ENCODE measurements at regions of chr22 and their contacts with region 1.

Region 1: GRCh38 chr22:37199103-37199759 is 11.2 kb upstream of the C1QTNF6 start:
- DNase-seq: peak; percentile 99
- CTCF ChIP-seq: peak; percentile 94

Region 2: GRCh38 chr22:37077884-37078485 is 121.2 kb before region 1 on chr22:
- CTCF ChIA-PET with region 1: interaction called, 40 read pairs
- POLR2A ChIA-PET with region 1: no interaction called
- DNase-seq: peak; percentile 91
- CTCF ChIP-seq: peak; percentile 97

Region 3: DNA sequence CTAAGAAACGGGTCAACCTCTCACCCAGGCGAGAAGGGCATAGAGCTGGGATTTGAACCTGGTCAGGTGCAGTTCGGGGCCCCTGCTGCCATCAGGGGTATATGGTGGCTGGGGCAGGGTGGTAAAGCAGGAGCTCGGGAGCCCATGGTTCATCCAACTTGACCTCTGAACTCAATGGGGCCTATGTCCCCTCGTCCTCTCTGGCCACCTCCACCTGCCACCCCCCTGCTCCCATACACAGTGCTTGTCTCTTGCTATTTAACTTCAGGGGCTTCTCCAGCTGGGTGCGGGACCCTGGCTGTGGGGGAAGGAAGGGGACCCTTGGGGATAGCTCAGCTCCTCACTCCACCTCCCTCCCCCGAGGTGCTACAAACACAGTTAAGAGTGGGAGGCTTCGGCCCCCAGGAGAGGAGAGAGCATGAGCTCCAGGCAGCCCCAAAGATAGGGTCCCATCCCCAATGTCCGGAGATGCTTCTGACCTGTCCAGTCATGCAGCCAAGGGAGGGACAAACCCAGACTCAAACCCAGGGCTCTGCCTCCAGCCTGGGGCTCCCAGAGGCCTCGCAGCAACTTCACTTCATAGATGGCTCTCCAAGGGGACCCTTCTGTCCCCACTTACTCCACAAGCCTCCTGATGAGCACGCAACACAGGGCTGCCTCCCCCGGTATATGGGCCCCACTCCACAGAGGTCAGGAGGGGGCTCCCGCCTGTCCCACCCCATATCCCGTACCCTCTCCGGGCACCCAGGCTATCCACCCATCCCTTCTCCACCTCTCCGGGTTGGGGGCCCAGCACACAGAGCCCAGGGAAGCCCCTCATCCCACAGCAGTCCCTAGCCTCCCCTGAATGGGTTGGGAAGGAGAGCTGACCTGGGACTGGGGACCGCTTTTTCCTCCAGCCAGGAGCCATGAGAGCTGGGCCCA is 50.2 kb before region 1 on chr22:
- CTCF ChIA-PET with region 1: interaction called, 14 read pairs
- POLR2A ChIA-PET with region 1: no interaction called
- DNase-seq: no peak
- CTCF ChIP-seq: no peak

Region 4: DNA sequence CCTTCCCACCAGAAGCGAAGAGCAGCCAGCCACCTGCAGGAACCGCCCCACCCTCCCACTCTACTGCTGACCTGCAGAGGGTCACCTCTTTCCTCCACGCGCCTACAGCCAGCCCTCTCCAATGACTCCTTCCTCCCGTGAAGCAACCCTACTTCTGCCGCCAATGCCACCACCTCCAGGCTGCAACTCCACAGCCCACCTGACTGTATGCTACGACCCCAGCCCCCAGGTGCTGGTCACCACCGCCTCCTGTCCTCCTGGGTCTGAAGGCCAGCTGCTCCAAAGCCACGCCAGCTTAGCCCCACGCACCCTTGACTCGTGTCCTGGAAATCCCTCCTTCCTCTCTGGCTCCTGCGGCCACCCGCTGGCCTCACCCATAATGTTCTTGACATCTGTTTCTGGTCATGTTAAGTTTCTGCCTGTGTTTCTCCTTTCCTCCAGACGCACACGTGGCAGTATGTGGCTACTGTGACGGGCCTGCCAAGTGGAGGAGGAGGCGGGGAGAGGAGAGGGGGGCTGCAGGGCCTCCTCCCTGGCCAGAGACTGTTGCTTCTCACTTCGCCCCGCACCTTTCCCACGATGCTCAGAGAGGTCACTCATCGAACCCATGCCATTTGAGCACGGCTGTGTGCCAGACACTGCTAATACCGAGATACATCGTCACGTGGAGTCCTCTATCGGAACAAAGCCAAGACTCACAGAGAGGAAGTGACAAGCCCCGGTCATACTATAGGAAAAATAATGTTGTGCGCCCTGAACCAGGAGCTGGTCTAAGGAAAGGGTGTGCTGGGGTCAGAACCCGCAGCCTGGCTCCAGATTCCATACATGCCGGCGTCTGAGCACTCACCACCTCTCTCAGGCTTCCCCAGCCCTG is 22.8 kb before region 1 on chr22:
- CTCF ChIA-PET with region 1: interaction called, 51 read pairs
- POLR2A ChIA-PET with region 1: no interaction called
- DNase-seq: peak; percentile 52
- CTCF ChIP-seq: no peak

Region 5: GRCh38 chr22:37223965-37224551 is 24.8 kb after region 1 on chr22:
- CTCF ChIA-PET with region 1: interaction called, 62 read pairs
- POLR2A ChIA-PET with region 1: no interaction called
- DNase-seq: peak; percentile 71
- CTCF ChIP-seq: no peak

Region 6: DNA sequence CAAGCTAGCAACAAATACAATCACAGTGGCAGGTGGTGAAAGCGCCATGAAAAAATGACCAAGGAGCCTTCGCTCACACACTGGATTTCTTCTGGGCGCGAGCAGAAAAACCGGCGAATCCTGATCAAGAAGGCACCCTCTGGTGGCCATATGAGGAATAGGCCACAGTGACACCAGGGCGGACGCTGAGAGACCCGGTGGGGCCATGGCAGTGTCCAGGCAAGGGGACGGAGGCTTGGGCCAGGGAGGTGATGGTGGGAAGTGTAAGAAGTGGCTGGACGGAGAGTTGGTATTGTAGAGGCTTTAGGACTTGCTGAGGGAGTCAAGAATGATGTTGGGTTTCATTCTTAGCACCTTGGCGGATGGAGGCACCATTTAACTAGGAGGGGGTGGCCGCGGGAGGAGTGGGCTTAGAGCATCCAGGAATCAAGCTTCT is 61.7 kb after region 1 on chr22:
- CTCF ChIA-PET with region 1: interaction called, 25 read pairs
- POLR2A ChIA-PET with region 1: no interaction called
- DNase-seq: peak; percentile 77
- CTCF ChIP-seq: peak; percentile 86

Region 7: DNA sequence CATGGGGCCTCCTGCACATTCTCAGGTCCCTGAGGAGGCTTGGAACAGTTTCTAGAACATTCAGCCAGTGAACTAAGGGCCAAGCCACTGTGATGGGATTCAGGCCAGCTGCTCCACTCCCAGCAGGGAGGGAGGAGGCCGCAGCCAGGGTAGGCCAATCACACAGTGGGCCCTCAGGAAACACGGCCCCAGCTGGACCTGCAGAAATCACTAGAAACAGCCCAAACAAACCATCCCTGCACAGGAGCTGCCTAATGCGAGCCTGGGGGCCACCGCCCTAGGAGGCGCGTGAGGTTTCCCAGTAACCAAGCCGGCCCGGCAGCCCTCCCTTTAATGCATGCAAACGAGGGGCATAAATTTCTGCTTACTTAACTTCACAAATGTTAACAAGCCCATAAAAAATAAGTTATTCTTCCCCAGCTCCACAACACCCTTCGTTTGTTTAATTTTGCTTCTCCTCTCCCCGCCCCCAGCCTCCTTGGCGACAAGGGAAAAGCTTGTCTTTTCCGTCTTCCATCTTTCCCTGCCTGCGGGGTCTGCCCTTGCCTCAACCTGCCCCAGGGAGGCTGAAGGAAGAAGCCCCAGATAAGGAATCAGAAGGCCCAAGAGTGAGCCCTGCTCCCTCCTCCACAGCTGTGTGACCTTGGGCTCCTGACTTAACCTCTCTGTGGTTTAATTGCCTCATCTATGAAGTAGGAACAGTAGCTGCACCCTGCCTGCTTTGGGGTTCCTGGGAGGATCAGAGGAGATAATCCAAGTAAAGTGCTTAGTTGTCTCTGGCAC is 202.4 kb after region 1 on chr22:
- CTCF ChIA-PET with region 1: no interaction called
- POLR2A ChIA-PET with region 1: no interaction called
- DNase-seq: no peak
- CTCF ChIP-seq: no peak

Measured in GM10248 (cell line).